Activated naive CD8-positive, alpha-beta T cell treated with anti-CD3 and anti-CD28 coated beads, Interleukin-2, amount 10 ng/mL, durations not matched to agents 7 days and 5 days (primary cell): ENCODE measurements at regions of chr17 and their contacts with region 1.

Region 1: GRCh38 chr17:2814481-2815341 is 18.5 kb downstream of the RAP1GAP2 start:
- DNase-seq: peak; percentile 87
- ATAC-seq: peak; percentile 86
- H3K4me3 Mint-ChIP-seq: peak overlapping the region; percentile 53
- H3K27ac Mint-ChIP-seq: peak overlapping the region; percentile 65
- H3K4me1 Mint-ChIP-seq: peaks cover 11% of the 10 kb centered on the region
- H3K27me3 Mint-ChIP-seq: peaks cover 46% of the 10 kb centered on the region

Region 2: GRCh38 chr17:2634361-2634960 is 180.2 kb before region 1 on chr17:
- POLR2A ChIA-PET with region 1: no interaction called
- DNase-seq: no peak
- ATAC-seq: no peak
- H3K4me3 Mint-ChIP-seq: no peak overlapping the region
- H3K27ac Mint-ChIP-seq: no peak overlapping the region
- H3K4me1 Mint-ChIP-seq: peaks cover 24% of the 10 kb centered on the region
- H3K27me3 Mint-ChIP-seq: no peaks in the 10 kb centered on the region

Region 3: GRCh38 chr17:2780256-2780655 is 34.5 kb before region 1 on chr17:
- POLR2A ChIA-PET with region 1: no interaction called
- DNase-seq: no peak
- ATAC-seq: no peak
- H3K4me3 Mint-ChIP-seq: no peak overlapping the region
- H3K27ac Mint-ChIP-seq: no peak overlapping the region
- H3K4me1 Mint-ChIP-seq: peaks cover 2% of the 10 kb centered on the region
- H3K27me3 Mint-ChIP-seq: peaks cover 33% of the 10 kb centered on the region

Region 4: GRCh38 chr17:2796164-2797125 is 18.3 kb before region 1 on chr17 and contains the start of gene RAP1GAP2:
- POLR2A ChIA-PET with region 1: interaction called, 53 read pairs
- DNase-seq: peak; percentile 70
- ATAC-seq: peak; percentile 77
- H3K4me3 Mint-ChIP-seq: peak within 1 kb of the TSS; percentile 77
- H3K27ac Mint-ChIP-seq: peak within 1 kb of the TSS; percentile 72
- H3K4me1 Mint-ChIP-seq: peaks cover 63% of the 10 kb centered on the region
- H3K27me3 Mint-ChIP-seq: peaks cover 71% of the 10 kb centered on the region
- total RNA-seq, gene RAP1GAP2: 4.0 to 4.8 TPM

Region 5: GRCh38 chr17:2883567-2884101 is 68.9 kb after region 1 on chr17:
- POLR2A ChIA-PET with region 1: no interaction called
- DNase-seq: no peak
- ATAC-seq: no peak
- H3K4me3 Mint-ChIP-seq: no peak overlapping the region
- H3K27ac Mint-ChIP-seq: no peak overlapping the region
- H3K4me1 Mint-ChIP-seq: no peaks in the 10 kb centered on the region
- H3K27me3 Mint-ChIP-seq: no peaks in the 10 kb centered on the region